Sigmoid colon (tissue), 7 donors: ENCODE measurements at regions of chr16 and their contacts with region 1.

Region 1: GRCh38 chr16:17467923-17468540 is 2.7 kb downstream of the XYLT1 start:
- DNase-seq: peak; percentile 94
- H3K4me3 ChIP-seq: peak overlapping the region; percentile 87 to 97 (median 88)
- H3K27ac ChIP-seq: peak overlapping the region; percentile 86 to 94 (median 91)
- H3K4me1 ChIP-seq: peaks cover 0 to 60% (median 48%) of the 10 kb centered on the region in 4 donors
- H3K27me3 ChIP-seq: no peaks in the 10 kb centered on the region
- CTCF ChIP-seq: peak; percentile 67 to 86 (median 77)
- EP300 ChIP-seq: no peak
- POLR2A ChIP-seq: no peak

Region 2: GRCh38 chr16:17224879-17225281 is 243.2 kb before region 1 on chr16:
- intact Hi-C with region 1: loop called (anchors 2 kb)
- DNase-seq: peak; percentile 89
- H3K4me3 ChIP-seq: no peak overlapping the region
- H3K27ac ChIP-seq: peak overlapping the region; percentile 76 to 88 (median 84)
- H3K4me1 ChIP-seq: peaks cover 0 to 50% (median 47%) of the 10 kb centered on the region in 4 donors
- H3K27me3 ChIP-seq: no peaks in the 10 kb centered on the region
- CTCF ChIP-seq: no peak
- EP300 ChIP-seq: peak; percentile 62 to 89 (median 70)
- POLR2A ChIP-seq: no peak

Region 3: GRCh38 chr16:17304491-17305119 is 163.4 kb before region 1 on chr16:
- intact Hi-C with region 1: loop called (anchors 2 kb)
- DNase-seq: peak; percentile 92
- H3K4me3 ChIP-seq: no peak overlapping the region
- H3K27ac ChIP-seq: peak overlapping the region; percentile 75 to 97 (median 96)
- H3K4me1 ChIP-seq: peaks cover 0 to 80% (median 62%) of the 10 kb centered on the region in 4 donors
- H3K27me3 ChIP-seq: no peaks in the 10 kb centered on the region
- CTCF ChIP-seq: no peak
- EP300 ChIP-seq: peak; percentile 62 to 95 (median 78)
- POLR2A ChIP-seq: no peak

Region 4: GRCh38 chr16:17345043-17345442 is 123.0 kb before region 1 on chr16:
- intact Hi-C with region 1: loop called (anchors 1 kb)
- DNase-seq: peak; percentile 96
- H3K4me3 ChIP-seq: no peak overlapping the region
- H3K27ac ChIP-seq: peak overlapping the region; percentile 82 to 92 (median 88)
- H3K4me1 ChIP-seq: peaks cover 0 to 78% (median 75%) of the 10 kb centered on the region in 4 donors
- H3K27me3 ChIP-seq: no peaks in the 10 kb centered on the region
- CTCF ChIP-seq: no peak
- EP300 ChIP-seq: peak; percentile 82 to 99 (median 88)
- POLR2A ChIP-seq: no peak

Region 5: GRCh38 chr16:17404941-17405689 is 62.9 kb before region 1 on chr16:
- intact Hi-C with region 1: loop called (anchors 5 kb)
- DNase-seq: peak; percentile 97
- H3K4me3 ChIP-seq: no peak overlapping the region
- H3K27ac ChIP-seq: peak overlapping the region; percentile 85 to 97 (median 92)
- H3K4me1 ChIP-seq: peaks cover 0 to 64% (median 52%) of the 10 kb centered on the region in 4 donors
- H3K27me3 ChIP-seq: no peaks in the 10 kb centered on the region
- CTCF ChIP-seq: no peak
- EP300 ChIP-seq: peak; percentile 62 to 93 (median 92)
- POLR2A ChIP-seq: no peak

Region 6: GRCh38 chr16:17511340-17511739 is 43.3 kb after region 1 on chr16:
- intact Hi-C with region 1: no loop called
- DNase-seq: no peak
- H3K4me3 ChIP-seq: no peak overlapping the region
- H3K27ac ChIP-seq: no peak overlapping the region
- H3K4me1 ChIP-seq: no peaks in the 10 kb centered on the region
- H3K27me3 ChIP-seq: no peaks in the 10 kb centered on the region
- CTCF ChIP-seq: no peak
- EP300 ChIP-seq: no peak
- POLR2A ChIP-seq: no peak

Region 7: DNA sequence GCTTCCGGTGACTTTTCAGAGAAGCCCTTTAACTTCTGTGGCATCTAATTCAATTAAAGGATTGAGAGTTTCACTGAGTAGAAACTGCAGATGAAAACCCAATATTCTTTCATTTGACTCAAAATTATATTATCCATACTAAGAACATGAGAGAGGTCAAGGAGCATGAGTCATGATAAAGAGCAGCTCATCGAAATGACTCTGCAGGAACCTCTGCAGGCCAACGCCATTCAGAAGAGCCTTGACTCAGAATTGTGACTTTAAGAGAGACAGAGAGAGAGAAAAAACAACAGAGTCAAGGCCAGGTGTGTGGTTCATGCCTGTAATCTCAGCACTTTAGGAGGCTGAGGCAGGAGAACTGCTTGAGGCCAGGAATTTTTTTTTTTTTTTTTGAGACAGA is 419.9 kb after region 1 on chr16:
- intact Hi-C with region 1: no loop called
- DNase-seq: no peak
- H3K4me3 ChIP-seq: no peak overlapping the region
- H3K27ac ChIP-seq: no peak overlapping the region
- H3K4me1 ChIP-seq: no peaks in the 10 kb centered on the region
- H3K27me3 ChIP-seq: no peaks in the 10 kb centered on the region
- CTCF ChIP-seq: no peak
- EP300 ChIP-seq: no peak
- POLR2A ChIP-seq: no peak